ENCODE measurements at regions of chr19 and their contacts with region 1.

Region 1: DNA sequence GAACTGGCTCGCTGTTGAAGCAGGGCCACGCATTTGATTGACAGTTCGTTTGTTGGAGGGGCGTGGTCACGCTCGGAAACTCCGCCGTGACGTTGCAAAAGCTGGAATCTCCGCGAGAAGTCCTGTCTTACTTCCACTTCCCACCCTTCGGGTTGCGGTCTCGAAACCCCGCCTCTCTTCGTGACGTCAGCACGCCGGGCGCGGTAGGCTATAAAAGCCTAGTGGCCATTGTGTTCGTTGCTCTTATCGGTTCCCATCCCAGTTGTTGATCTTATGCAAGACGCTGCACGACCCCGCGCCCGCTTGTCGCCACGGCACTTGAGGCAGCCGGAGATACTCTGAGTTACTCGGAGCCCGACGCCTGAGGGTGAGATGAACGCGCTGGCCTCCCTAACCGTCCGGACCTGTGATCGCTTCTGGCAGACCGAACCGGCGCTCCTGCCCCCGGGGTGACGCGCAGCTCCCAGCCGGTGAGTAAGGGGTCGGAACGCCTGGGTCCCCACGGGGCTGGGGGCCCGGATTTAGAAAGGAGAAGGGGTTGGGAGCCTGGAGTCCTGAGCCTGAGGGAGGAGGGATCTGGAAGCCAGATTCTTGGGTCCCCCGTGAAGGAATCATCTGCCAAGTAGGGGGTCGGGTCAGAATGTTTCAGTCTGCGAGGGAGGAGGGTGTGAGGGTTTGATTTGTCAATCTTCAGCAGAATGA is at the start of gene PPP1R15A:
- DNase-seq: peak; percentile 99
- ATAC-seq: peak; percentile 25
- H3K4me3 Mint-ChIP-seq: peak within 1 kb of the TSS; percentile 94
- H3K27ac Mint-ChIP-seq: peak within 1 kb of the TSS; percentile 98
- H3K4me1 Mint-ChIP-seq: peaks cover 34% of the 10 kb centered on the region
- H3K27me3 Mint-ChIP-seq: no peaks in the 10 kb centered on the region
- total RNA-seq, gene PPP1R15A: 82.8 to 83.9 TPM

Region 2: GRCh38 chr19:48899781-48900476 is 27.6 kb after region 1 on chr19 and contains the start of gene NUCB1:
- POLR2A ChIA-PET with region 1: interaction called, 79 read pairs
- DNase-seq: peak; percentile 99
- ATAC-seq: peak; percentile 89
- H3K4me3 Mint-ChIP-seq: peak within 1 kb of the TSS; percentile 96
- H3K27ac Mint-ChIP-seq: peak within 1 kb of the TSS; percentile 96
- H3K4me1 Mint-ChIP-seq: peaks cover 24% of the 10 kb centered on the region
- H3K27me3 Mint-ChIP-seq: peaks cover 16% of the 10 kb centered on the region
- total RNA-seq, gene NUCB1: 203 to 214 TPM

Region 3: DNA sequence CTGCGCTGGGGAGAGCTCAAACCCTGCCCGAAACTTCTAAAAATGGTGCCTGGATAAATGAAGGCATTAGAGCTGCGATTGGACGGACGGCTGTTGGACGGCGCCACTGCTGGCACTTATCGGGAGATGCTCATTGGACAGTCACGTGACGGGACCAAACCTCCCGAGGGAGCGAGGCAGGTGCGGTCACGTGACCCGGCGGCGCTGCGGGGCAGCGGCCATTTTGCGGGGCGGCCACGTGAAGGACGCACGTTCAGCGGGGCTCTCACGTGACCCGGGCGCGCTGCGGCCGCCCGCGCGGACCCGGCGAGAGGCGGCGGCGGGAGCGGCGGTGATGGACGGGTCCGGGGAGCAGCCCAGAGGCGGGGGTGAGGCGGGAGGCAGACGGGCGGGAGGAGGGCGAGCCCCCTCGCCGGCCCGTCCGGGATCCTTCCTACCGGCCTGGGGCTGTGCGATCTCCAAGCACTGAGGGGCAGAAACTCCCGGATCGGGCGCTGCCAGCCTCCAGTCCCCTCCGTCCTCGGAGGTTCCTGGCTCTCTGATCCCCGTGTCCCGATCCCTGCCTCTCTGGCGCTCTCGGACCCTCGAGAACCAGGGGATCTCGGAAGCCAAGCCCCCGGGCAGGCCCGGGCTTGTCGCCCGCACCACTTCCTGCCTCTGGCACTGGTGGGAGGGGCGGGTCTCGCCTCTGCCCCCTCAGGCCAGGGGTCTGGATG is 82.4 kb after region 1 on chr19 and contains the start of gene BAX:
- POLR2A ChIA-PET with region 1: interaction called, 15 read pairs
- DNase-seq: peak; percentile 94
- ATAC-seq: peak; percentile 85
- H3K4me3 Mint-ChIP-seq: peak within 1 kb of the TSS; percentile 96
- H3K27ac Mint-ChIP-seq: peak within 1 kb of the TSS; percentile 94
- H3K4me1 Mint-ChIP-seq: peaks cover 28% of the 10 kb centered on the region
- H3K27me3 Mint-ChIP-seq: peaks cover 1% of the 10 kb centered on the region
- total RNA-seq, gene BAX: 285 to 296 TPM

Region 4: GRCh38 chr19:48965040-48965805 is 92.9 kb after region 1 on chr19 and contains the start of gene FTL:
- POLR2A ChIA-PET with region 1: interaction called, 42 read pairs
- DNase-seq: peak; percentile 93
- ATAC-seq: peak; percentile 71
- H3K4me3 Mint-ChIP-seq: peak within 1 kb of the TSS; percentile 87
- H3K27ac Mint-ChIP-seq: peak within 1 kb of the TSS; percentile 92
- H3K4me1 Mint-ChIP-seq: peaks cover 49% of the 10 kb centered on the region
- H3K27me3 Mint-ChIP-seq: no peaks in the 10 kb centered on the region
- total RNA-seq, gene FTL: 1,232 to 1,343 TPM

Region 5: DNA sequence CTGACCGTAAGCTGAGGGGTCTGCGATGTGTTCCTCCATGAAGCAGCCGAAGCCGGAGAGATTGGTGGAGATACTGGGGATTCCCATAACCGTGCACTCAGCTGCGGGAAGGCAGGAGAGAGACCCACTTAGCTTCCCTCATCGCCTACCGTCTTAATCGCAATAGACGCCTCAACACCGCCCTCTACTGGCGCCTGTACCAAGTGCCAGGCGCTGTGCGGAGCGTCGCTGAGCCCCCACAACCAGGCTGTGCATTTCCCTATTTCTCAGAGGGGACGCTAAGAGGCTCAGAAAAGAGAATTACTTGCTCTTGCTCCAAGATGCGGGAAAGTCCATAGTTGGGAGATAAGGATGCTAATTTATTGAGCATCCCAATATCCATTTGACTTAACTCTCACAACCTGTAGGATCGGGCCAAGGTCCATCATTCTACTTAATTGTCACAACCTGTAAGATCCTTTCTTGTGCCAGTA is 98.6 kb after region 1 on chr19:
- POLR2A ChIA-PET with region 1: interaction called, 42 read pairs
- DNase-seq: peak; percentile 87
- ATAC-seq: peak; percentile 71
- H3K4me3 Mint-ChIP-seq: no peak overlapping the region
- H3K27ac Mint-ChIP-seq: no peak overlapping the region
- H3K4me1 Mint-ChIP-seq: peaks cover 17% of the 10 kb centered on the region
- H3K27me3 Mint-ChIP-seq: no peaks in the 10 kb centered on the region

Region 6: DNA sequence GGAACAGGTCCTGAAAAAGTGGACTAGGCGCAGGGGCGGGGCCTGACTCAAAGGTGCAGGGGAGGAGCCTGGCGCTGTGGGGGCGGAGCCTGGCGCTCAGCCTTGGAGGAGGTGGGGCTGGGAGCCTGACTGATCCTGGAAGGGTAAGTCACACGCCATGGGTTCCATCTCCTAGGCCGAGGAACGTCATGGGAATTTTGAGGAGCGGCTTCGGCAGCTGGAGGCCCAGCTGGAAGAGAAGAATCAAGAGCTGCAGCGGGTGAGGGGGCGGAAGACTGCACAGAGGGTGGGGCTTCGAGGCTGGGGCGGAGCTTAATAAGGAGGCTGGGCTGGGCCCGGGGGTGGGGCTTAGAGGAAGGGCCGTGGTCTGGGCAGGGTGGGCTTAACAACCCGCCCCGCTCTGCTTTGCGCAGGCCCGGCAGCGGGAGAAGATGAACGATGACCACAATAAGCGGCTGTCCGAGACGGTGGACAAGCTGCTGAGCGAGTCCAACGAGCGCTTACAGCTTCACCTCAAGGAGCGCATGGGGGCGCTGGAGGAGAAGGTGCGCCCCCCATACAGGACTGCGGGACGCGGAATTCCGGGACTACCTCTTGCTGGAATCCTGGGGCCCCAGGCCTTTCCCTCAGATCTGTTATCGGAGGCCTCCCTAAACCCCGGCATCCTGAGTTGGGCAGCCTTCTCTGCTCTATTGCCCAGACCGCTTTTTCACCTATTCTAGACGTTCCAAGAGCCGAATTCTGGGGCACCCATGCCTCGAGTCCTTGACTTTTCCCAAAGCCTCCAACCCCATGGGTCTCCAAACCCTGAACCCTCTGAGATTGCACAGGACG is 261.5 kb after region 1 on chr19:
- POLR2A ChIA-PET with region 1: no interaction called
- DNase-seq: peak; percentile 72
- ATAC-seq: peak; percentile 57
- H3K4me3 Mint-ChIP-seq: peak overlapping the region; percentile 81
- H3K27ac Mint-ChIP-seq: peak overlapping the region; percentile 54
- H3K4me1 Mint-ChIP-seq: peaks cover 8% of the 10 kb centered on the region
- H3K27me3 Mint-ChIP-seq: peaks cover 15% of the 10 kb centered on the region